MCF 10A (cell line): ENCODE measurements at regions of chr18 and their contacts with region 1.

Region 1: GRCh38 chr18:70373042-70373519 is 84.2 kb downstream of the SOCS6 start:
- DNase-seq: peak; percentile 95
- H3K4me3 Mint-ChIP-seq: peak overlapping the region; percentile 11
- H3K27ac Mint-ChIP-seq: peak overlapping the region; percentile 46
- H3K4me1 Mint-ChIP-seq: peaks cover 40% of the 10 kb centered on the region
- H3K27me3 Mint-ChIP-seq: no peaks in the 10 kb centered on the region
- CTCF ChIP-seq: no peak

Region 2: GRCh38 chr18:70355620-70356385 is 17.3 kb before region 1 on chr18:
- CTCF ChIA-PET with region 1: interaction called, 3 read pairs
- POLR2A ChIA-PET with region 1: interaction called, 20 read pairs
- intact Hi-C with region 1: no loop called
- DNase-seq: no peak
- H3K4me3 Mint-ChIP-seq: no peak overlapping the region
- H3K27ac Mint-ChIP-seq: peak overlapping the region; percentile 63
- H3K4me1 Mint-ChIP-seq: peaks cover 8% of the 10 kb centered on the region
- H3K27me3 Mint-ChIP-seq: no peaks in the 10 kb centered on the region
- CTCF ChIP-seq: no peak